Gastrocnemius medialis (tissue), 4 donors: ENCODE measurements at regions of chr11 and their contacts with region 1.

Region 1: GRCh38 chr11:66677599-66678375 is at the start of gene RBM4B:
- DNase-seq: peak; percentile 95 to 96
- ATAC-seq: peak; percentile 88 to 89
- H3K4me3 ChIP-seq: peak within 1 kb of the TSS; percentile 77 to 89 (median 86)
- H3K27ac ChIP-seq: peak within 1 kb of the TSS; percentile 96 to 99 (median 98)
- H3K4me1 ChIP-seq: peaks cover 18 to 31% of the 10 kb centered on the region in 2 donors
- H3K27me3 ChIP-seq: no peaks in the 10 kb centered on the region
- CTCF ChIP-seq: no peak
- POLR2A ChIP-seq: peak; percentile 87 to 96
- total RNA-seq, gene RBM4B: 4.5 to 11.7 (median 6.5) TPM

Region 2: DNA sequence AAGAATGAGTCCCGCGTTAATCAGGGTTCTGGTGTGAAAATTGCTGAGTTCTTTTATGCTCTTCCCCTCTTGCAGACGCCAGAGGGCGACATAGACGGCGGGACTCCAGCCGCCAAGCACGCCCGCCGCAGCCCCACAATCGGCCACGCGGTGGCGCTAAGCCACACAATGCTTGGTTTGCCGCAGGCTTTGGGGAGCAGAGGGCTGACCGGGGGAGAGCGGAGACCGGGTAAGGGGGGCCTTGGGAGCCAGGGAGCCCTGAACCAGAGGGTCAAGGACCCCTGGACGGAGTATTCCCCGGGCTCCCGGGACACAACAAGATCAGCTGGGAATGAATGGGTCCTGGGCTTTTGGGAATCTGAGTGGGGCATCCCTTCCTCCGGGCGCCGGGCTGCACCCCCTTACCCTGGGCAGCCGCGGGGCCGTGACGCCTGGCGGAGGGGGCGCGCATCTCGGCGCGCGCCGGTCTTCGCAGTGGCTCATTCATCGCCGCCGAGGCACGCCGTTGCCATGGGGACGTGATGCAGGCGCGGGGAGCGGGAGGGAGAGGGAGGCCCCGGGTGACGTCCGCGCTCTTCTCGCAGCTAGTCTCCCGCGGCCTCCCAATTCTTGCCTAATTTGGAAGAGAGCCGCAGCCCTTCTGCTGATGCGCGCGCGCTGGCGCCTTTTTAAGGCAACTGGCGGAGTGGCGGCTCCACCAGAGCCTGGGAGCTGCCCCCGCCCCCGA is 269.1 kb before region 1 on chr11:
- in situ Hi-C with region 1: loop called in 2 of 4 experiments (anchors 25 kb)
- intact Hi-C with region 1: no loop called
- DNase-seq: peak; percentile 57 to 74
- ATAC-seq: peak; percentile 84 to 93
- H3K4me3 ChIP-seq: peak overlapping the region; percentile 9 to 45 (median 36)
- H3K27ac ChIP-seq: no peak overlapping the region
- H3K4me1 ChIP-seq: no peaks in the 10 kb centered on the region
- H3K27me3 ChIP-seq: peaks cover 0 to 10% (median 0%) of the 10 kb centered on the region in 3 donors
- CTCF ChIP-seq: peak; percentile 64 to 100 (median 99)
- POLR2A ChIP-seq: no peak

Region 3: GRCh38 chr11:66480117-66480938 is 197.5 kb before region 1 on chr11 and contains the start of gene DPP3:
- in situ Hi-C with region 1: no loop called
- intact Hi-C with region 1: loop called (anchors 5 kb)
- DNase-seq: peak; percentile 96 to 97
- ATAC-seq: peak; percentile 90 to 92
- H3K4me3 ChIP-seq: peak within 1 kb of the TSS; percentile 62 to 95 (median 79)
- H3K27ac ChIP-seq: peak within 1 kb of the TSS; percentile 86 to 96 (median 89)
- H3K4me1 ChIP-seq: peaks cover 9 to 10% of the 10 kb centered on the region in 2 donors
- H3K27me3 ChIP-seq: no peaks in the 10 kb centered on the region
- CTCF ChIP-seq: peak in 1 of 5 experiments; percentile 21
- POLR2A ChIP-seq: peak; percentile 89 to 93
- total RNA-seq, gene DPP3: 28.5 to 58.5 (median 37.4) TPM

Region 4: GRCh38 chr11:66579017-66579606 is 98.7 kb before region 1 on chr11:
- in situ Hi-C with region 1: loop called (anchors 5 to 10 kb)
- intact Hi-C with region 1: loop called (anchors 1 kb)
- DNase-seq: peak; percentile 50 to 61
- ATAC-seq: peak; percentile 68 to 91
- H3K4me3 ChIP-seq: no peak overlapping the region
- H3K27ac ChIP-seq: no peak overlapping the region
- H3K4me1 ChIP-seq: no peaks in the 10 kb centered on the region
- H3K27me3 ChIP-seq: no peaks in the 10 kb centered on the region
- CTCF ChIP-seq: peak; percentile 77 to 85 (median 83)
- POLR2A ChIP-seq: no peak

Region 5: GRCh38 chr11:66616379-66617154 is 61.2 kb before region 1 on chr11 and contains the start of gene RBM14:
- in situ Hi-C with region 1: no loop called
- intact Hi-C with region 1: loop called (anchors 1 kb)
- DNase-seq: peak; percentile 99 to 100
- ATAC-seq: peak; percentile 97 to 98
- H3K4me3 ChIP-seq: peak within 1 kb of the TSS; percentile 77 to 96 (median 93)
- H3K27ac ChIP-seq: peak within 1 kb of the TSS; percentile 92 to 95 (median 94)
- H3K4me1 ChIP-seq: peaks cover 35 to 43% of the 10 kb centered on the region in 2 donors
- H3K27me3 ChIP-seq: no peaks in the 10 kb centered on the region
- CTCF ChIP-seq: peak in 1 of 5 experiments; percentile 11
- POLR2A ChIP-seq: peak; percentile 97 to 99
- total RNA-seq, gene RBM14: 17.0 to 43.2 (median 29.4) TPM

Region 6: DNA sequence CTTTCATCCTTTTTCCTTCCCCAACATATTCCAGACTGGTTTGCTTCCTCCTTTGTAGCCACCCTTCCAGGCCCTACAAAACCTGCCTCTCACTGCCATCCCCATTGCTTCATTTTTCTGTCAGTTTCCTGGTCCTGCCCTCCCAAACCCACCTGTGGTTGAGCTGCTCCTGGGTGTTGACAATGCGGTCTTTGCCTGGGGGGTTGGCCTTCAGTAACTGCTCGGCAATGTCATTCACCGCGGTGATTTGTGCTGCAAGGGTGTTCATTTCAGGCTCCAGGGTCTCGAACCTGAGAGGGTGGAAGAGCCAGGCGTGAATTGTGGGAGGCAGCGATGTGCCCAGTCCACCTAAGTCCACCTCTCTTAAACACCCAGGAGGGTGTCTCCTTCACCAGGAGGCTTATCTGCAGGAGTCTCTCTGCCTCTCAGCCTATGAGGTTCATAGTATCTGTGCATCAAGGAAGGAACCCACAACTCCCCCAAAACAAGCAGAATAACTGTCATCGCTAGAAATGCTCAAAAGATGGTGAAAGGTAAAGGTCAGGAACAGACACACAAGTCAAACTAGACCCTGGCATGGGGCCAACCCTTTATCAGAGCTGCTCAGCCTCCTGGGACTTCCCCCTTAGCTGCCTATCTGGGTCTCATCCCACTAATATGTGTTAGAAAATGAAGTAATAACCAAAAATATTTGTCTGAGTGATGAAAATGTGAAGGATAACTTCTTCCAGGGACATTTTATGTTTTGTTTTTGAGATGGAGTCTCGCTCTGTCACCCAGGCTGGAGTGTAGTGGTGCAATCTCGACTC is 23.8 kb after region 1 on chr11:
- in situ Hi-C with region 1: no loop called
- intact Hi-C with region 1: no loop called
- DNase-seq: no peak
- ATAC-seq: no peak
- H3K4me3 ChIP-seq: no peak overlapping the region
- H3K27ac ChIP-seq: no peak overlapping the region
- H3K4me1 ChIP-seq: no peaks in the 10 kb centered on the region
- H3K27me3 ChIP-seq: no peaks in the 10 kb centered on the region
- CTCF ChIP-seq: no peak
- POLR2A ChIP-seq: no peak

Region 7: GRCh38 chr11:66784575-66784974 is 106.8 kb after region 1 on chr11:
- in situ Hi-C with region 1: no loop called
- intact Hi-C with region 1: no loop called
- DNase-seq: no peak
- ATAC-seq: no peak
- H3K4me3 ChIP-seq: no peak overlapping the region
- H3K27ac ChIP-seq: no peak overlapping the region
- H3K4me1 ChIP-seq: no peaks in the 10 kb centered on the region
- H3K27me3 ChIP-seq: no peaks in the 10 kb centered on the region
- CTCF ChIP-seq: no peak
- POLR2A ChIP-seq: no peak